ENCODE measurements at regions of chr4 and their contacts with region 1.

Region 1: GRCh38 chr4:141099326-141099725 is 33.9 kb downstream of the RNF150 start:
- DNase-seq: no peak
- H3K4me3 ChIP-seq: no peak overlapping the region
- H3K4me3 Mint-ChIP-seq: no peak overlapping the region
- H3K27ac Mint-ChIP-seq: no peak overlapping the region
- H3K4me1 ChIP-seq: no peaks in the 10 kb centered on the region
- H3K4me1 Mint-ChIP-seq: no peaks in the 10 kb centered on the region
- H3K27me3 ChIP-seq: no peaks in the 10 kb centered on the region
- H3K27me3 Mint-ChIP-seq: peaks cover 8% of the 10 kb centered on the region
- CTCF ChIP-seq: no peak

Region 2: GRCh38 chr4:140982613-140983340 is 116.5 kb before region 1 on chr4:
- CTCF ChIA-PET with region 1: no interaction called
- POLR2A ChIA-PET with region 1: no interaction called
- intact Hi-C with region 1: no loop called
- DNase-seq: peak in 1 of 2 experiments; percentile 3
- H3K4me3 ChIP-seq: no peak overlapping the region
- H3K4me3 Mint-ChIP-seq: no peak overlapping the region
- H3K27ac Mint-ChIP-seq: no peak overlapping the region
- H3K4me1 ChIP-seq: no peaks in the 10 kb centered on the region
- H3K4me1 Mint-ChIP-seq: no peaks in the 10 kb centered on the region
- H3K27me3 ChIP-seq: no peaks in the 10 kb centered on the region
- H3K27me3 Mint-ChIP-seq: peaks cover 4% of the 10 kb centered on the region
- CTCF ChIP-seq: no peak

Region 3: GRCh38 chr4:142893012-142893411 is 1793.7 kb after region 1 on chr4:
- CTCF ChIA-PET with region 1: no interaction called
- POLR2A ChIA-PET with region 1: no interaction called
- intact Hi-C with region 1: loop called (anchors 10 kb)
- DNase-seq: no peak
- H3K4me3 ChIP-seq: no peak overlapping the region
- H3K4me3 Mint-ChIP-seq: no peak overlapping the region
- H3K27ac Mint-ChIP-seq: no peak overlapping the region
- H3K4me1 ChIP-seq: no peaks in the 10 kb centered on the region
- H3K4me1 Mint-ChIP-seq: no peaks in the 10 kb centered on the region
- H3K27me3 ChIP-seq: no peaks in the 10 kb centered on the region
- H3K27me3 Mint-ChIP-seq: no peaks in the 10 kb centered on the region
- CTCF ChIP-seq: no peak

Measured in Caco-2 (cell line).